Esophagus muscularis mucosa (tissue), 4 donors: ENCODE measurements at regions of chr4 and their contacts with region 1.

Region 1: GRCh38 chr4:16264798-16265197 is 38.5 kb upstream of the TAPT1 start:
- DNase-seq: no peak
- H3K4me3 ChIP-seq: no peak overlapping the region
- H3K27ac ChIP-seq: no peak overlapping the region
- H3K4me1 ChIP-seq: peaks cover 0 to 11% (median 2%) of the 10 kb centered on the region in 4 donors
- H3K27me3 ChIP-seq: no peaks in the 10 kb centered on the region
- CTCF ChIP-seq: peak; percentile 57 to 66 (median 66)
- EP300 ChIP-seq: no peak
- POLR2A ChIP-seq: no peak

Region 2: DNA sequence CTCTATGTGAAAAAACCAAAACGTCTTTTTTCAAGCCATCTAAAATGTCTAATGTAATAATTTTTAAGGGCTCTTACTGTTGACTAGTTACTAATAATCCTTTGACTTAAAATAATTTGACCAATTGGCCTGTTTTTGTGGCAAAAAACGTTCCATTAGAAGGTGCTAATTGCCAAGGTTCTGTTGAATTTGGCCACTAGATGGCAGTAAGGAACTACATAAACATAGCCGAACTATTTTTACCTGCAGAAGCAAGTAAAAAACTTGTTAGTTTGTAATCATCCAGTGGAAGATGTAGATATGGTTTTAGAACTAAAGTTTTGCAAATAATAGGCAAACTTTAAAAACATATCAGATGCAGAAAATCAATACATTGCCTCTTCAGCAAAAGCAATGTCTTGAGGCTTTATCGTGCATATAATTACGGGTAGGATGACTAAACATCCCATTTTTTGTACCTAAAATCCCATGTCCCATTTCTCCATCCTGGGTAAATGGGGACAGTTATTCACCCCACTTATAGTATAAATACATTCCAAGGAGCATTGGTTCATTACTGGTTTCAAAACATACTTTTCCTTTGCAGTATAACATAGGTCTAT is 238.5 kb before region 1 on chr4:
- intact Hi-C with region 1: loop called (anchors 2 kb)
- DNase-seq: no peak
- H3K4me3 ChIP-seq: no peak overlapping the region
- H3K27ac ChIP-seq: no peak overlapping the region
- H3K4me1 ChIP-seq: peaks cover 0 to 15% (median 8%) of the 10 kb centered on the region in 4 donors
- H3K27me3 ChIP-seq: peaks cover 0 to 4% (median 0%) of the 10 kb centered on the region in 4 donors
- CTCF ChIP-seq: peak; percentile 74 to 85 (median 77)
- EP300 ChIP-seq: no peak
- POLR2A ChIP-seq: no peak

Region 3: GRCh38 chr4:16032871-16033513 is 231.8 kb before region 1 on chr4:
- intact Hi-C with region 1: loop called (anchors 2 kb)
- DNase-seq: no peak
- H3K4me3 ChIP-seq: no peak overlapping the region
- H3K27ac ChIP-seq: no peak overlapping the region
- H3K4me1 ChIP-seq: peaks cover 3 to 16% (median 8%) of the 10 kb centered on the region in 4 donors
- H3K27me3 ChIP-seq: no peaks in the 10 kb centered on the region
- CTCF ChIP-seq: no peak
- EP300 ChIP-seq: no peak
- POLR2A ChIP-seq: no peak

Region 4: GRCh38 chr4:16196478-16197393 is 68.1 kb before region 1 on chr4:
- intact Hi-C with region 1: loop called (anchors 2 kb)
- DNase-seq: no peak
- H3K4me3 ChIP-seq: peak overlapping the region; percentile 34 to 45 (median 42)
- H3K27ac ChIP-seq: peak overlapping the region; percentile 67 to 76 (median 70)
- H3K4me1 ChIP-seq: peaks cover 41 to 65% (median 57%) of the 10 kb centered on the region in 4 donors
- H3K27me3 ChIP-seq: no peaks in the 10 kb centered on the region
- CTCF ChIP-seq: peak; percentile 47 to 56 (median 50)
- EP300 ChIP-seq: no peak
- POLR2A ChIP-seq: no peak

Region 5: DNA sequence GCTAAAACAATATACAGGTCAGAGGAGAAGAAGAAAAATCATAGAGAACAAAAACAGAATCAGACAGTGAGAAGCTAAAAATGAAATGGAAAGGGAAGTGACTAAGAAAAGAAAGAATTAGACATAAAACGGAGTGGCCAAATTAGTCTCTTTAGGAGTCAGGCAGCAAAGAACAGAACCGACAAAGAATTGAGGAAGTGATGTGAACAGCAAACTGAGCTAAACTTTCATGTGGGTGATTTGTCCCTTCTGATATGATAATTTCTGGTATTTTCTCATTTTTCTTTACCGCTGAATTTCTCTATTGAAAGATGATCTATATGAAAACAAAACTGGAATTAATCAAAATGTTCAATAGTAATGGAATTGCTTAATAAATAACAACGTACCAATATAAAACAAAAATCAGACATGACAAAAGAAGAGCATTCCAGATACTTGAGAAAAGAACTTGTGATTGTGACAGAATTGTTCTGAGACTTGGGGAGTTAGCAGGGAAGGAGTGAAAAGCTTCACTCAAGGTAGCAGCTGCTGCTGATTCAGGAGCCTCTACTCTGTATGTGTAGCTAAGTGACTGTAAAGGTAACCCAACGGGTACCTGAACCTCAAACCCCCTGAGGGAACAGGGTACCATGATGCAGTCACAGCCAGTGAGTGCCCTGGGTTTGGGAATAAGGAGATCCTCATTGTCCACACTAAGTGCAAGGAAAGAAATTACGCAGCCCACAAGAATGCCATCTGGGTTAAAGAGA is 47.3 kb before region 1 on chr4:
- intact Hi-C with region 1: no loop called
- DNase-seq: no peak
- H3K4me3 ChIP-seq: no peak overlapping the region
- H3K27ac ChIP-seq: no peak overlapping the region
- H3K4me1 ChIP-seq: peaks cover 8 to 33% (median 14%) of the 10 kb centered on the region in 4 donors
- H3K27me3 ChIP-seq: no peaks in the 10 kb centered on the region
- CTCF ChIP-seq: no peak
- EP300 ChIP-seq: no peak
- POLR2A ChIP-seq: no peak

Region 6: GRCh38 chr4:16544251-16544731 is 279.5 kb after region 1 on chr4:
- intact Hi-C with region 1: no loop called
- DNase-seq: peak; percentile 92
- H3K4me3 ChIP-seq: no peak overlapping the region
- H3K27ac ChIP-seq: peak overlapping the region in 2 of 4 donors; percentile 33 to 43
- H3K4me1 ChIP-seq: no peaks in the 10 kb centered on the region
- H3K27me3 ChIP-seq: no peaks in the 10 kb centered on the region
- CTCF ChIP-seq: no peak
- EP300 ChIP-seq: no peak
- POLR2A ChIP-seq: no peak

Region 7: GRCh38 chr4:16598243-16599206 is 333.7 kb after region 1 on chr4:
- intact Hi-C with region 1: no loop called
- DNase-seq: no peak
- H3K4me3 ChIP-seq: no peak overlapping the region
- H3K27ac ChIP-seq: peak overlapping the region in 1 of 4 donors; percentile 21
- H3K4me1 ChIP-seq: peaks cover 0 to 12% (median 4%) of the 10 kb centered on the region in 4 donors
- H3K27me3 ChIP-seq: no peaks in the 10 kb centered on the region
- CTCF ChIP-seq: no peak
- EP300 ChIP-seq: no peak
- POLR2A ChIP-seq: no peak